ENCODE measurements at regions of chr2 and their contacts with region 1.

Region 1: GRCh38 chr2:61910603-61911002 is 5.1 kb downstream of the COMMD1 start:
- H3K4me3 Mint-ChIP-seq: no peak overlapping the region
- H3K27ac Mint-ChIP-seq: no peak overlapping the region
- H3K4me1 Mint-ChIP-seq: peaks cover 7% of the 10 kb centered on the region
- H3K27me3 Mint-ChIP-seq: no peaks in the 10 kb centered on the region

Region 2: DNA sequence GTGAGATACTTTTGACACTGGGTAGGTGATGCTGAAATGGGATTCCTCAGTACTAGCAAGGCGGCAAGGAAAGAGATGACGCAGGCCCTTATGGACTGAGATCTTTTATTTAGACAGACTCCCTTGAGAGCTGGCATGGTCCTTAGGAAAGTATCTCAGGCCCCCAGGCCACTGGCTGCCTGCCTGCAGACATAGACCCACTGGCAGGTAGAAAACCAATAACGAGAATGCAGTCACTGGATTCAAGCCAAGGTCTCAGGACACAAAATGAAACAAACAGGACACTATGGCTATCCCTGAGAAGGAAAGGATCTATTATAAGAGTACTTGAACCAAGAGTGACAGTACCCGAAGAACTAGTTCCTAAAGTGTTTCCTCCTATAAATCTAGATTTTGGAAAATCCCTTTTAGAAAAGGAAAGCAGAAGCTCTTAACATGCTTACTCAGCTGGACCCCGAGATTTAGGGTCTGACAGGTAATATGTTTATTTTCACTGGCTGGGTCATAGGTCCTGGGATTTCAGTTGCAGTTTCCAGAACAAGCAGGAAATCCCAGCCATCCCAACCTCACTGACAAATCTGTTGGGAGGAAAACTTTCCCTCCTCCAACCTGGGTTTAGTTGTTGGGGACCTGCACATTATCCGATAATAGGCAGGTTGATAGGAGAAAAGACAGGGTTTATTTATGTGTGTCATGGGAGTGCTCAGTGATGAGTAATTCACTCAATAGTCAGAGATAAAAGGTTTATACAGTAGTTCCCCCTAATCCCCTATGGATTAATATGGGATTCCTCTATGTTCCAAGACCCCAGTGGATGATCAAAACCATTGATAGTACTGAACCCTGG is 39.3 kb after region 1 on chr2:
- intact Hi-C with region 1: no loop called
- H3K4me3 Mint-ChIP-seq: no peak overlapping the region
- H3K27ac Mint-ChIP-seq: peak overlapping the region; percentile 17
- H3K4me1 Mint-ChIP-seq: peaks cover 26% of the 10 kb centered on the region
- H3K27me3 Mint-ChIP-seq: no peaks in the 10 kb centered on the region

Region 3: DNA sequence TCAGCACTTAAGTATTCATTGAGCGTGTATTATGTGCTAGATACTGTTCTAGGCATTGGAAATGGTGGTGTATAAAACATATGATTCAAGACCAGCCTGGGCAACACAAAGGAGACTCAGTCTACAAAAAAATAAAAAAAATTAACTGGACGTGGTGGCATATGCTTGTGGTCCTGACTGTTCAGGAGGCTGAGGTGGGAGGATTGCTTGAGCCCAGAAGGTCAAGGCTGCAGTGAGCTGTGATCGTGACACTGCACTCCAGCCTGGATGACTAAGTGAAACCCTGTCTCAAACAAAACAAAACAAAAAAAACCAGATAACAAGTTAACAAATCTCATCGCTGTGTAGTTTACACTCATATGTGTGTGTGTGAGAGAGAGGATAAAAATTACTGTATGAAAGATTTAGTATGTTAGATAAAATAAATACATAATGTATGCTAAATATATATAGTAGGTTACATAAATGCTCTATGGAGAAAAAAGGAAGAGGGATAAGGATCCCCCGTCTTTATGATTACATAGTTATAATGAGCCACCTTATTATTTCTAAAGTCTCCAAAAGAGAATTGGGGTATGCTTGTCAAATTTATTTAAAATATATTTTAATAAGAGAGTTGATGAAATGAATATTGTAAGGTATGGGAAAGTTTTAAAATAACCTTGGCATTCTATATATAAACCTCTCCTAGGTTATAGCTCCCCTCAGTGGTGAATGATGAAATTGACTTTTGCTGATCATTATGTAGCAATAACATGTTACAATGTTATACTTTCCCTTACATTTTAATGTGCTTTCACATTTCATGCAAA is 864.2 kb after region 1 on chr2:
- intact Hi-C with region 1: loop called (anchors 5 kb)
- H3K4me3 Mint-ChIP-seq: no peak overlapping the region
- H3K27ac Mint-ChIP-seq: no peak overlapping the region
- H3K4me1 Mint-ChIP-seq: peaks cover 14% of the 10 kb centered on the region
- H3K27me3 Mint-ChIP-seq: no peaks in the 10 kb centered on the region

Measured in dendritic cell treated with granulocyte-macrophage colony-stimulating factor and Interleukin-4, amounts not matched to agents 40 ng/mL and 50 ng/mL, for 4 days (primary cell).